Activated CD8-positive, alpha-beta T cell treated with anti-CD3 and anti-CD28 coated beads for 36 hours (primary cell): ENCODE measurements at regions of chr1 and their contacts with region 1.

Region 1: DNA sequence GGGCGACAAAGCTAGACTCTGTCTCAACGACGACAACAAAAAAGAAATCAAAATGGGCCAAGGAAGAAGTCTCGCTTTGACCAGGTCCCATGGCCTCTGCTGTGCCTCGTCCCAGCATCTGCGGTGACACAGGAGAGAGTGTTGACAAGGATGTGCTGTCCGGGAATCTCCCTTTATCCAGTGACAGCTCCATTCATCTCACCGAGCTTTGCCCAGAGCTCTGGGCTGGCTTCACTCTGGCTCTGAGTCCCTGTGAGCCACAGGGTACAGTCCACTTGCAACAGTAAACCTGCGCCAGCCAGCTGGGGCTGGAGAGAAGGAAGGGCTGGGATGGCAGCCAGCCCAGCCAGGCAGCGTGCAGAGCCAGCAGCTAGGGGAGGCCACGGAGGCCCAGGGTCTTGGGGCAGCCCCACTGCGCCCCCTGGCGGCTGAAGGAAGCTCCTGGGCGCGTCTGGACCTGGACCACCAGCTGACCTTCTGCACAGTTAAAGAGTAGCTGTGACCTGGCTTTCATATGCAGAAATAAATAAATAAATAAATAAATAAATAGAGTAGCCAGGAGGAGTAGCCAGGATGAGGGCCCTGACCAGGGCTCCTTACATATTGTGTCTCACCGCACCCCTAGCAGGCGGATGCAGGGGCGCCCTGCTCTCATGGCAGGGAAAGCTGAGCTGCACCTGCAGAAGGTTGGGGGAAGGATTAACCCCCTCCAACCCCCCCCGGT is 29.7 kb downstream of the ENO1 start:
- DNase-seq: peak; percentile 87
- ATAC-seq: peak; percentile 96
- H3K4me3 Mint-ChIP-seq: no peak overlapping the region
- H3K27ac Mint-ChIP-seq: no peak overlapping the region
- H3K4me1 Mint-ChIP-seq: no peaks in the 10 kb centered on the region
- H3K27me3 Mint-ChIP-seq: no peaks in the 10 kb centered on the region
- CTCF ChIP-seq: peak; percentile 96

Region 2: DNA sequence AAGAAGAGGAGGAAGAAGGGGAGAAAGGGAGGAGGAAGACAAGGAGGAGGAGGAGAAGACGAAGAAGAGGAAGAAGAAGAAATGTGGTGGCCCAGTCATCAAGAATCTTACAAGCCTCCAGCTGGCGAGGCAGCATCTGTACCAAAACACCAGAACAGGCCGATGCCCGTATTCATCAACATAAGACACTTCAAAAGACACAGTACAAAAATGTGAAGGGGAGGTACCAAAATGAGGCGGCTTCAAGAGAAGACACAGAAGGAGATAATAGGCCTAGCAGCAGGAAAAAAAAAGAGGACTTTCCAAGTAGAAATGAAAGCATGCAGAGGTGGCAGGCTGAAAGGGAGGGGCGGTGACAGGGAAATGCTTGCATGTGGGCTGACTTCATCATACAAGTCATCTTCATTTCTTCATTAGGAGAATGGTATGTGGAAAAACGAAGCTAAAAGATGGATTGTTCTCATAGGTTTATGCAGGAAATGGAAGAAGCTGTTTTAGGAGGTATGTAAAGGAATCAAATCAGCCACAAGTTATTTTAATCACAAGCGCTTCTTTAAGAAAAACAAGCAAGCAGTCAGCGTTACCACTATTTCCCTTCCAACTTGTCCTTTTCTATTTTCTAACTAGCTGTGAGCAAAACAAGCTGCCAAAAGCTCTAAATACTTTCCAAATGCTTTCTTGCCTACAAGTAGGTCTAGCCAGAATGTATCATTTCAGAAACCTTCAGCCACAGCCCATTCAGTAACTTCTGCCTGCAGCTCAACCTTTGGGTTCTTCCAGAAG is 338.6 kb before region 1 on chr1:
- CTCF ChIA-PET with region 1: no interaction called
- POLR2A ChIA-PET with region 1: no interaction called
- intact Hi-C with region 1: no loop called
- DNase-seq: peak; percentile 68
- ATAC-seq: peak; percentile 68
- H3K4me3 Mint-ChIP-seq: peak overlapping the region; percentile 73
- H3K27ac Mint-ChIP-seq: peak overlapping the region; percentile 93
- H3K4me1 Mint-ChIP-seq: peaks cover 40% of the 10 kb centered on the region
- H3K27me3 Mint-ChIP-seq: no peaks in the 10 kb centered on the region
- CTCF ChIP-seq: no peak

Region 3: DNA sequence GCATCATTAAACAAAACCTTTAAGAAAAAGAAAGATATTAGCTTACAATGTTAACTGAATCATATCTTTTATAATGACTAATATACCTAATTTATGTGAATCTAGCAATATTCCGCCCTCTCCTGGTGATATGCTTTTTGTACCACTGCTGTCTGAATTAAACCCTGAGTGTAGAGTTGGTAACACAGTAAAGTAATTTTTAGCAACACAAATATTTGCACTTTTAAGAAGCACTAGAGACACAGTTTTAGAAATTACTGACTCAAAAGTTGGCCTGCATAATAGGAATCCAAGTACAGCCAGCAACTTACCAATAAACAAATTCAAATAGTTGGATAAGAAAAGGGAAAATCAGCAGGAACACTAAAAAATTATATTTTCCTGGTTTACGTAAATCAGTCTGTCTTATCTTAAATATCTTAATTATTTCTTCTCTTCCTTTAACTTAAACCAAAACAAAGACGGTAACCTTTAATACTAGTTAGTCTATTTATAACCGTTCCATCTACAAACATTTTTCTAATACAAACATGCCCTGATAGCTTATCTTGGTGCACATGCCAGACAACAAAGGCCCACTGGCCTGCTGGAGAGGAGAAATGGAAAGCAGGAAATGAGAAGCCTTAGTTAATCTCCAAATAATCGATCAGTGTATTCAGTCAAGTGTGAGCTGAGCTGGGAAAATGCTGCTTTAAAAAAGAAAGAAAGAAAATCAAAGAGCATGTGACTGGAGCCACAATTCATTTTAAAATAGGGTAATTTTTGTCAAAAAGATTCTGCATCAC is 277.4 kb before region 1 on chr1:
- CTCF ChIA-PET with region 1: interaction called, 11 read pairs
- POLR2A ChIA-PET with region 1: no interaction called
- intact Hi-C with region 1: no loop called
- DNase-seq: no peak
- ATAC-seq: no peak
- H3K4me3 Mint-ChIP-seq: no peak overlapping the region
- H3K27ac Mint-ChIP-seq: no peak overlapping the region
- H3K4me1 Mint-ChIP-seq: peaks cover 5% of the 10 kb centered on the region
- H3K27me3 Mint-ChIP-seq: no peaks in the 10 kb centered on the region
- CTCF ChIP-seq: peak; percentile 10

Region 4: GRCh38 chr1:8740034-8740449 is 108.8 kb before region 1 on chr1:
- CTCF ChIA-PET with region 1: interaction called, 17 read pairs
- POLR2A ChIA-PET with region 1: no interaction called
- intact Hi-C with region 1: no loop called
- DNase-seq: no peak
- ATAC-seq: no peak
- H3K4me3 Mint-ChIP-seq: no peak overlapping the region
- H3K27ac Mint-ChIP-seq: no peak overlapping the region
- H3K4me1 Mint-ChIP-seq: peaks cover 7% of the 10 kb centered on the region
- H3K27me3 Mint-ChIP-seq: no peaks in the 10 kb centered on the region
- CTCF ChIP-seq: no peak

Region 5: GRCh38 chr1:8807004-8807403 is 41.8 kb before region 1 on chr1:
- CTCF ChIA-PET with region 1: interaction called, 26 read pairs
- POLR2A ChIA-PET with region 1: no interaction called
- intact Hi-C with region 1: no loop called
- DNase-seq: no peak
- ATAC-seq: no peak
- H3K4me3 Mint-ChIP-seq: no peak overlapping the region
- H3K27ac Mint-ChIP-seq: no peak overlapping the region
- H3K4me1 Mint-ChIP-seq: peaks cover 10% of the 10 kb centered on the region
- H3K27me3 Mint-ChIP-seq: no peaks in the 10 kb centered on the region
- CTCF ChIP-seq: no peak

Region 6: DNA sequence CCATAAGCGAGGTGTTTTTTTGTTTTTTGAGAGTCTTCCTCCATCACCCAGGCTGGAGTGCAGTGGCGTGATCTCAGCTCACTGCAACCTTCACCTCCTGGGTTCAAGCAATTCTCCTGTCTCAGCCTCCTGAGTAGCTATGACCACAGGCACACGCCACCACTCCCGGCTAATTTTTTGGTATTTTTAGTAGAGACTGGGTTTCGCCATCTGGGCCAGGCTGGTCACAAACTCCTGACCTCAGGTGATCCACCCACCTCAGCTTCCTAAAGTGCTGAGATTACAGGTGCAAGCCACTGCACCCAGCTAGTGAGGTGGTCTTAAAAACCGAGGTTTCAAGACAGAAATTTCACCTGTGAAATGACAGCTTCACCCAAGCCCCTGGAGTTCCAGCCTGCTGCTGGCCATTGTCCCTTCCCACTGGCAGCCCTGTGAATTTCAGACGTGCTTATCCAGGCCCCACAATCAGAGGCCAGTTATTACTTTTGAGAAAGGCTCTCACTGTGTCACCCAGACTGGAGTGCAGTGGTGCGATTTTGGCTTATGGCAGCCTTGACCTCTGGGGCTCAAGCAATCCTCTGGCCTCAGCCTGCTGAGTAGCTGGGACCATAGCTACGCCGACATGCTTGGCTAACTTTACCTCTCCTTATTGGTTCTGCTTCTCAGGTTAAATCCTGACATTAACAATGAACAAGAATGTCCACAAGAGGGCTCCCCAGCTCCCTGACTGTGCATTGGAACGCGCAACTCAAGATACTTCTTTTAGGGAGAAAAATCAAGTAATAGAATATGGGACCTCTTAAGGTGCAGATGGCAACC is 10.3 kb after region 1 on chr1:
- CTCF ChIA-PET with region 1: interaction called, 104 read pairs
- POLR2A ChIA-PET with region 1: interaction called, 20 read pairs
- intact Hi-C with region 1: no loop called
- DNase-seq: peak; percentile 74
- ATAC-seq: peak; percentile 54
- H3K4me3 Mint-ChIP-seq: no peak overlapping the region
- H3K27ac Mint-ChIP-seq: peak overlapping the region; percentile 75
- H3K4me1 Mint-ChIP-seq: peaks cover 34% of the 10 kb centered on the region
- H3K27me3 Mint-ChIP-seq: no peaks in the 10 kb centered on the region
- CTCF ChIP-seq: peak; percentile 68